Caco-2 (cell line): ENCODE measurements at regions of chr3 and their contacts with region 1.

Region 1: GRCh38 chr3:114745322-114746240 is 401.5 kb downstream of the ZBTB20 start:
- DNase-seq: peak; percentile 67 to 75
- H3K4me3 ChIP-seq: peak overlapping the region; percentile 30
- H3K4me3 Mint-ChIP-seq: peak overlapping the region; percentile 80
- H3K27ac Mint-ChIP-seq: peak overlapping the region; percentile 86
- H3K4me1 ChIP-seq: peaks cover 35% of the 10 kb centered on the region
- H3K4me1 Mint-ChIP-seq: peaks cover 17% of the 10 kb centered on the region
- H3K27me3 ChIP-seq: no peaks in the 10 kb centered on the region
- H3K27me3 Mint-ChIP-seq: no peaks in the 10 kb centered on the region
- CTCF ChIP-seq: no peak

Region 2: GRCh38 chr3:114730397-114730796 is 15.2 kb before region 1 on chr3:
- CTCF ChIA-PET with region 1: no interaction called
- POLR2A ChIA-PET with region 1: no interaction called
- intact Hi-C with region 1: loop called (anchors 1 kb)
- DNase-seq: peak; percentile 29 to 35
- H3K4me3 ChIP-seq: no peak overlapping the region
- H3K4me3 Mint-ChIP-seq: no peak overlapping the region
- H3K27ac Mint-ChIP-seq: no peak overlapping the region
- H3K4me1 ChIP-seq: peaks cover 22% of the 10 kb centered on the region
- H3K4me1 Mint-ChIP-seq: peaks cover 25% of the 10 kb centered on the region
- H3K27me3 ChIP-seq: no peaks in the 10 kb centered on the region
- H3K27me3 Mint-ChIP-seq: no peaks in the 10 kb centered on the region
- CTCF ChIP-seq: no peak

Region 3: DNA sequence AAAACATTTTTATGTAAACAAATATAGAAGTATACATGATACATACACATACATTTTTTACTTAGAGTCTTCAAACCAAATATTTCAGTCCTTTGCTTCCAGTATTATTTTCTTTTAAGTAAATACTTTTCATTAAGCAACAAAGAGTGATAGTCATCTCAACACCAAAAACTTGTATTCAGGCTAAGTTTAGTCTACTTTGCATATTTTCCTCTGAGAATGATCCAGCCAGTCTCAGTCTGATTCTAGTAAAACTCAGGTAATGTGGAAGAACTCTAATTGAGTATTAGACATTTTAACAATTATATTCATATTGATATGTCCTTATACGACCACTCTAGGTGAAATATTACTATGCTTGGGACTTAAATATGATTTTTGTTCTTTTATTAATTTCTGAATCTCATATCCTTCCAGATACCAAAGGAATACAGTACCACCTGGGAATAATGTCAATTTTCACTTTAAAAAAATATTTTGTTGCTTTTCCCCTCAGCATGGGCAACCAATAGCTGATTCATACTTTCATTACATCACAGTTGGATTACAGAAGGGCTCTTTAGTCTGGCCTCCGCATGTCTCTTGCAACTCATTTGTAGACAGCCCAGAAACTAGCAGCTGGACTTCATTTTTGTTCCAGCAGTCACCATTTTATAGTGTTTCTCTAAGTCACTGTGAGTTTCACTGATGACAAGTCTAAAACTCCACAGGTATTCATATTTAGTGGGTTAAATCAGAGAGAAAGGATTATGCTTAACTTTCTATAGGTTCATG is 11.1 kb after region 1 on chr3:
- CTCF ChIA-PET with region 1: no interaction called
- POLR2A ChIA-PET with region 1: no interaction called
- intact Hi-C with region 1: loop called (anchors 1 kb)
- DNase-seq: no peak
- H3K4me3 ChIP-seq: no peak overlapping the region
- H3K4me3 Mint-ChIP-seq: no peak overlapping the region
- H3K27ac Mint-ChIP-seq: no peak overlapping the region
- H3K4me1 ChIP-seq: no peaks in the 10 kb centered on the region; the same call in 1 of the 2 replicates
- H3K4me1 Mint-ChIP-seq: no peaks in the 10 kb centered on the region
- H3K27me3 ChIP-seq: no peaks in the 10 kb centered on the region
- H3K27me3 Mint-ChIP-seq: no peaks in the 10 kb centered on the region
- CTCF ChIP-seq: no peak

Region 4: GRCh38 chr3:114892135-114892879 is 146.7 kb after region 1 on chr3:
- CTCF ChIA-PET with region 1: no interaction called
- POLR2A ChIA-PET with region 1: no interaction called
- intact Hi-C with region 1: no loop called
- DNase-seq: no peak
- H3K4me3 ChIP-seq: no peak overlapping the region
- H3K4me3 Mint-ChIP-seq: no peak overlapping the region
- H3K27ac Mint-ChIP-seq: no peak overlapping the region
- H3K4me1 ChIP-seq: no peaks in the 10 kb centered on the region
- H3K4me1 Mint-ChIP-seq: no peaks in the 10 kb centered on the region
- H3K27me3 ChIP-seq: no peaks in the 10 kb centered on the region
- H3K27me3 Mint-ChIP-seq: no peaks in the 10 kb centered on the region
- CTCF ChIP-seq: no peak